ENCODE measurements at regions of chr18 and their contacts with region 1.

Region 1: GRCh38 chr18:52607985-52608384 is 268.0 kb downstream of the DCC start:
- DNase-seq: no peak
- H3K4me3 ChIP-seq: no peak overlapping the region
- CTCF ChIP-seq: no peak
- POLR2A ChIP-seq: no peak

Region 2: DNA sequence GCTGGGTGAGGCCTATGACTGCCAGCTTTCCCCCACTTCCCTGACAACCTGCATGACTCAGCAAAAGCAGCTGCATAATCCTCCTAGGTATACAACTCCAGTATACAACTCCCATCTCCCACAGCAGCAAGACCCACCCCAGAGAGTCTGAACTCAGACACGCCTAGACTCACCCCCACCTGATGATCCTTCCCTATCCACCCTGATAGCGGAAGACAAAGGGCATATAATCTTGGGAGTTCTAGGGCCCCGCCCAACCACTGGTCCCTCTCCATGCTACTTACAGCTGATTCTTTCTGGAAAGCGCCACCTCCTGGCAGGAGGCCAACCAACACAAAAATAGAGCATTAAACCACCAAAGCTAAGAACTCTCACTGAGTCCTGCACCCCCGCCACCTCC is 28.6 kb after region 1 on chr18:
- intact Hi-C with region 1: loop called (anchors 2 kb)
- DNase-seq: no peak
- H3K4me3 ChIP-seq: no peak overlapping the region
- CTCF ChIP-seq: no peak
- POLR2A ChIP-seq: no peak

Region 3: GRCh38 chr18:53324353-53324752 is 716.4 kb after region 1 on chr18:
- intact Hi-C with region 1: no loop called
- DNase-seq: no peak
- H3K4me3 ChIP-seq: no peak overlapping the region
- CTCF ChIP-seq: no peak
- POLR2A ChIP-seq: no peak